ENCODE measurements at regions of chr2 and their contacts with region 1.

Region 1: DNA sequence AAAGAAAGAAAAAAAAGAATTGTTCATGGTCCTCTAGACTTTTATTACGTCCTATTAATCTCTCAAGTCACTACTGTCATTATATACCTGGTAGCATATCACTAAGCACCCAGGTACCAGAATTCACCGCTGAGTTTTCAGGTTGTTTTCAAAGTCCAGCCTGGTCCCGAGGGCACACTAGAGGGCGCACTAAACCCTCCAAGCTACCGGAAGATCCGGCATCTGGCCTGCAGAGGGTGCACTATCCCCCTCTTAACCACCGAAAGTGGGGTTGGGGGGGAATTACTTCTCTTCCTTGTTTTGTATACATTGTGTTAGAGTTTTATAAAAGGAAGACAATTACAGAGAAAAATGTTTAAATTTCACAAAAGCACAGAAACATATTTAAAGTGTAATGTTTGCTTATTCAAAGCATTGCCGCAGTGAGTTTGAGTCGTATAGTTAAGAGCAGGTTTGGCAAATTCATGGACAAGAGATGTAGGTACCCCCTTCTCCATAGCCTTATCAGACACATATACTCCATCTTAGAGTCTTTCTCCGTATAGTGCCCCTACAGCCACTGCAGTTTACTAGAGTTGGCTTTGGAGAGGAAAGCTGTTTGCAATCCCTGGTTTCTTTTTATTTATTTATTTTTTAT is 19.2 kb downstream of the MOGAT1 start:
- DNase-seq: peak; percentile 83 to 87
- ATAC-seq: peak; percentile 85 to 96
- H3K4me3 ChIP-seq: peak overlapping the region; percentile 27; the same call in 1 of the 3 replicates
- H3K27ac ChIP-seq: peak overlapping the region; percentile 33 to 54; a peak in 1 of 6 replicates
- H3K4me1 ChIP-seq: no peaks in the 10 kb centered on the region
- CTCF ChIP-seq: peak; percentile 100
- EP300 ChIP-seq: no peak
- POLR2A ChIP-seq: no peak
- RAD21 ChIP-seq: peak; percentile 87 to 88

Region 2: DNA sequence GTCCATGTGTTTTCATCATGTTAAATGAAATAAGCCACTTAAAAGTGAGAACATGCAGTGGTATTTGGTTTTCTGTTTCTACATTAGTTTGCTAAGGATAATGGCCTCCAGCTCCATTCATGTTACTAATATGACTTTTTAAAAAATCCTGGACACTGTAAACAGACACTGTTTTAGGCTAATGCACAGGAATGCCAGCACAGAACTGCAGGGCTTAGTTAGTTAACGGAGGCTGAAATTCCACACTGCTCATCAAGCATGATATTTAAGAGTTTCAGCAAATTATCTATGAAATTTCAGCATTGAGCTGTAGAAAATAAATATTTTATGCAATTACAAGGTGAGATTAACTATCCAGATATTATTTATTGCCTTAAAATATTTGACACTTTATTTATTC is 349.4 kb before region 1 on chr2:
- CTCF ChIA-PET with region 1: no interaction called
- POLR2A ChIA-PET with region 1: no interaction called
- DNase-seq: no peak
- ATAC-seq: no peak
- H3K4me3 ChIP-seq: no peak overlapping the region
- H3K27ac ChIP-seq: no peak overlapping the region
- H3K4me1 ChIP-seq: no peaks in the 10 kb centered on the region
- CTCF ChIP-seq: no peak
- EP300 ChIP-seq: no peak
- POLR2A ChIP-seq: no peak
- RAD21 ChIP-seq: no peak

Region 3: GRCh38 chr2:222677981-222678380 is 12.7 kb before region 1 on chr2:
- CTCF ChIA-PET with region 1: interaction called, 24 read pairs
- POLR2A ChIA-PET with region 1: no interaction called
- DNase-seq: no peak
- ATAC-seq: peak in 1 of 2 experiments; percentile 66; a peak in 3 of 6 replicates
- H3K4me3 ChIP-seq: no peak overlapping the region
- H3K27ac ChIP-seq: no peak overlapping the region
- H3K4me1 ChIP-seq: no peaks in the 10 kb centered on the region
- CTCF ChIP-seq: no peak
- EP300 ChIP-seq: no peak
- POLR2A ChIP-seq: no peak
- RAD21 ChIP-seq: no peak

Region 4: GRCh38 chr2:222722327-222722946 is 31.8 kb after region 1 on chr2:
- CTCF ChIA-PET with region 1: no interaction called
- POLR2A ChIA-PET with region 1: no interaction called
- DNase-seq: no peak
- ATAC-seq: no peak
- H3K4me3 ChIP-seq: no peak overlapping the region
- H3K27ac ChIP-seq: no peak overlapping the region
- H3K4me1 ChIP-seq: no peaks in the 10 kb centered on the region
- CTCF ChIP-seq: no peak
- EP300 ChIP-seq: no peak
- POLR2A ChIP-seq: no peak
- RAD21 ChIP-seq: no peak

Region 5: DNA sequence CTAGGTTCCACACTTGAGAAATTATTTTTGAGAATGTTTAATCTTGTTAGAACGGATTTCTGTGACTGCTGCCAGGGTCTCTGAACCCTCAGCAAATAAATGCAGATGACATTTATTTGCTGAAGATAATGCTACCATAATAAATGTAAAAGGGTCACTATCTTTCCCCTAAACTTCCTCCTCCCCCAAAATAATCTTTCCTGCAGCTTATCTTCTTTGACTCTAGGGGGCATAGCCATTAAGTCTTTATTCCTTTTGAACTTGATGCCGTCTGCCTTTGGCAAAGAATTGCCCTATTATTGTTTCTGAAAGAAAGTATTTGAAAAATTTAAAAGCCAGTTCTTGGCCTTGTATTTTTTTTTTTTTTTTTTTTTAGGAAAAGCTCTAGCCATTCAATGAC is 106.6 kb after region 1 on chr2:
- CTCF ChIA-PET with region 1: interaction called, 14 read pairs
- POLR2A ChIA-PET with region 1: no interaction called
- DNase-seq: peak; percentile 32 to 45
- ATAC-seq: peak; percentile 60 to 66; a peak in 3 of 6 replicates
- H3K4me3 ChIP-seq: no peak overlapping the region
- H3K27ac ChIP-seq: peak overlapping the region; percentile 52 to 72; a peak in 5 of 6 replicates
- H3K4me1 ChIP-seq: peaks cover 28% of the 10 kb centered on the region
- CTCF ChIP-seq: peak; percentile 53
- EP300 ChIP-seq: no peak
- POLR2A ChIP-seq: no peak
- RAD21 ChIP-seq: peak; percentile 50 to 52; a peak in 4 of 5 replicates

Region 6: GRCh38 chr2:222860740-222861410 is 170.2 kb after region 1 on chr2 and contains the start of gene ACSL3:
- CTCF ChIA-PET with region 1: interaction called, 14 read pairs
- POLR2A ChIA-PET with region 1: no interaction called
- DNase-seq: peak; percentile 82 to 95
- ATAC-seq: peak; percentile 95 to 97
- H3K4me3 ChIP-seq: peak within 1 kb of the TSS; percentile 96
- H3K27ac ChIP-seq: peak within 1 kb of the TSS; percentile 97 to 100
- H3K4me1 ChIP-seq: peaks cover 45% of the 10 kb centered on the region
- CTCF ChIP-seq: no peak
- EP300 ChIP-seq: no peak
- POLR2A ChIP-seq: peak; percentile 98
- RAD21 ChIP-seq: peak in 1 of 2 experiments; percentile 45; a peak in 2 of 5 replicates
- polyA plus RNA-seq, gene ACSL3: 160 and 209 TPM in 2 replicates

Region 7: GRCh38 chr2:222903234-222904220 is 212.8 kb after region 1 on chr2:
- CTCF ChIA-PET with region 1: interaction called, 34 read pairs
- POLR2A ChIA-PET with region 1: no interaction called
- DNase-seq: peak; percentile 52 to 72
- ATAC-seq: peak; percentile 69 to 83
- H3K4me3 ChIP-seq: no peak overlapping the region
- H3K27ac ChIP-seq: peak overlapping the region; percentile 13 to 61; a peak in 4 of 6 replicates
- H3K4me1 ChIP-seq: peaks cover 63% of the 10 kb centered on the region
- CTCF ChIP-seq: peak; percentile 78
- EP300 ChIP-seq: no peak
- POLR2A ChIP-seq: no peak
- RAD21 ChIP-seq: peak; percentile 82 to 86

Region 8: DNA sequence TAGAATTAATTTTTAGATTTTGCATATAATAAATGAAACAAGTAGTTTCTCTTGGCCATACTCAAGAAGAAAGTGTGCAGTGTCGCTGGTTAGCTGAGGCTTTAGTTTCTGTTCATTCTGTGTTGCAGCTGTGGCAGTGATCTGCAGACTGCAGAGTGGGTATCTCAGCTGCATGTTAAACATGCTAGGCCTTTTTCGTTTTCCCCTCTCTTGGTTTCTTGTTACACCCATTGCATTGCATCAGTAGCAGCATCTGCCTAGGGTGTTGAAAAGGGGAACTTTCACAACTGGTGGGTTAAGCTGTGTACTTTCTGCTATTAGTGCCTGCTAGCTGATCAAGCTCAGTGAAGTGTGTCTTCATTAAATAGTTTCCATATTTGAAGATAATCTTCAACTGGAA is 221.4 kb after region 1 on chr2:
- CTCF ChIA-PET with region 1: interaction called, 34 read pairs
- POLR2A ChIA-PET with region 1: no interaction called
- DNase-seq: no peak
- ATAC-seq: no peak
- H3K4me3 ChIP-seq: no peak overlapping the region
- H3K27ac ChIP-seq: no peak overlapping the region
- H3K4me1 ChIP-seq: peaks cover 19% of the 10 kb centered on the region
- CTCF ChIP-seq: no peak
- EP300 ChIP-seq: no peak
- POLR2A ChIP-seq: no peak
- RAD21 ChIP-seq: no peak

Measured in A549 (cell line).